ENCODE measurements at regions of chr5 and their contacts with region 1.

Region 1: DNA sequence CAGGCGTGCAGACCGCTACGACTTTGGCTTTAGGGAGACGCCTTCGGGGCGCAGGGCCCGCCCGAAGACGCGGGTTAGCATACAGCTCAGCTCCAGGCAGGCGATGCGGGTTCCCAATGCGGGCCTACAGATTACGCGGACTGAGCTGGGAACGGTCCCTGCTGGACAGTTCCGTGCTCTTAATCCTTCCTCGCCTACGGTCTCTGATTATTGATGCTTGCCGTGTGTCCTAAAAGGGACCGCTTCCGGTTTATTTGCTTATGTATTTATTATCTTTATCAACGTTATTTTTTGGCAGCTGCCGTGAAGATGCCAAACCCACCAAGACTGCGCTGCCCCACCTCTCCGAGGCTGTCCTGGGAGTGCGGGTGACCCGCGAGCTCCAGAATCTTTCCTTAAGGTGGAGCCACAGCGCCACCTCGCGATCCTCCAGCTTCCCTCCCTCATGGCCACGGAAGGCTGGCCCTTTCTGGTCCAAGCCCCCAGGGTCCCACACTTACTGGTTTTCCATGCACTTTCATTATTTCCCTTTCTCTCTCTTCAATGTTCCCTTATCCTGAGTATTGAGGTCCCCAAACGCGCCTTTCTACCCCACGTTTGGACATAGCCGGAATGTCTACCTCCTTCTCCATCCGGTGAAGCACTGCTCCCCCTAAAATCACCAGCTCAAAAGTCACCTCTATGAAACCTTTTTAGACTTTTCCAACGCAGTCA is 7.0 kb upstream of the EBF1 start:
- DNase-seq: peak; percentile 55 to 68 (median 67)
- H3K4me3 ChIP-seq: peak overlapping the region in 1 of 3 experiments; percentile 51
- H3K4me3 Mint-ChIP-seq: peak overlapping the region; percentile 76 to 90
- H3K27ac ChIP-seq: no peak overlapping the region
- H3K27ac Mint-ChIP-seq: peak overlapping the region in 2 of 7 donors; percentile 45 to 59
- H3K4me1 ChIP-seq: peaks cover 18% of the 10 kb centered on the region in 2 donors
- H3K4me1 Mint-ChIP-seq: peaks cover 27% of the 10 kb centered on the region
- H3K27me3 ChIP-seq: peaks cover 55 to 84% of the 10 kb centered on the region in 2 donors
- H3K27me3 Mint-ChIP-seq: peaks cover 63 to 86% (median 67%) of the 10 kb centered on the region in 3 donors
- CTCF ChIP-seq: peak; percentile 99

Region 2: GRCh38 chr5:157828944-157829632 is 1277.6 kb before region 1 on chr5:
- intact Hi-C with region 1: loop called in 1 of 2 experiments (anchors 5 kb)
- DNase-seq: no peak
- H3K4me3 ChIP-seq: no peak overlapping the region
- H3K4me3 Mint-ChIP-seq: no peak overlapping the region
- H3K27ac ChIP-seq: no peak overlapping the region
- H3K27ac Mint-ChIP-seq: peak overlapping the region in 3 of 7 donors; percentile 26 to 75 (median 36)
- H3K4me1 ChIP-seq: peaks cover 3 to 7% of the 10 kb centered on the region in 2 donors
- H3K4me1 Mint-ChIP-seq: peaks cover 40% of the 10 kb centered on the region
- H3K27me3 ChIP-seq: no peaks in the 10 kb centered on the region
- H3K27me3 Mint-ChIP-seq: peaks cover 0 to 2% (median 0%) of the 10 kb centered on the region in 3 donors
- CTCF ChIP-seq: peak; percentile 40

Region 3: DNA sequence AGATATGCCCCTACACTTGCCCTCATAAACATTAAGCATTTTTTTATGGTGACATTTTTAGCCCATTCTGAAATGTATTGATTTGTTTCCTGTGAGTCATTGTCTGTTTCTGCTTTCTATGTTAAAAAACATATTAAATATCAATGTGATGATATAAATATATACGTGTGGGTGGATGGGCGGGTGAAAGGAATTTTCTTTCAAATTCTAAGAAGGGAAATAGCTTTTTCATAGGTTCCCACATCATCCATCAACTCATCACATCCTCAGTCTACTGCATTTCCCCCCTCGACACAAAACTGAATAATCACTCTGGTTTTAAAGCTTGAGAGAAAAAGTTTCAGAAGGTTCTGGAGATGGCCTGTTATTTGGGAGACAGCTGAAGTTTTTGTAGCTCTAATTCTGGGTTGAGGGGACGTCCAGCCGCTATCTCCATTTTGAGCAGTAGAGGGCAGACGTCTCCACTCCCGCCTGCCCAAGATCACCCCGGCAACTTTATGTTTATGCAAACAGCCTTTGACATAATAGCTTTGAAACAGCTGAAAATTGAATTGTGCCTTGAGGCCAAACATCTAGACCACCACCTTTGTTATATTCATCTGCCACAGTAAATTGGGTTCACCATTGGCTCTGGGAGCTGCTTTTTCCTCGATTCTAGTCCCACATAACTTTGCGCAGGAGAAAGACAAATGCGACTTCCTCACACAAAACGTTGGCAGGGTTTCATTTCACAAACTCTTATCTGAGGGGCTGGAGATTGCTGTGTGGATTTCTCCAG is 1031.5 kb before region 1 on chr5:
- intact Hi-C with region 1: loop called in 1 of 2 experiments (anchors 5 kb)
- DNase-seq: peak; percentile 9 to 26 (median 17)
- H3K4me3 ChIP-seq: no peak overlapping the region
- H3K4me3 Mint-ChIP-seq: peak overlapping the region; percentile 51 to 81
- H3K27ac ChIP-seq: no peak overlapping the region
- H3K27ac Mint-ChIP-seq: no peak overlapping the region
- H3K4me1 ChIP-seq: no peaks in the 10 kb centered on the region
- H3K4me1 Mint-ChIP-seq: peaks cover 5% of the 10 kb centered on the region
- H3K27me3 ChIP-seq: peaks cover 0 to 2% of the 10 kb centered on the region in 2 donors
- H3K27me3 Mint-ChIP-seq: peaks cover 0 to 7% (median 7%) of the 10 kb centered on the region in 3 donors
- CTCF ChIP-seq: peak; percentile 81

Region 4: GRCh38 chr5:158174918-158175851 is 931.5 kb before region 1 on chr5:
- intact Hi-C with region 1: loop called (anchors 2 to 5 kb)
- DNase-seq: peak; percentile 33 to 62 (median 59)
- H3K4me3 ChIP-seq: no peak overlapping the region
- H3K4me3 Mint-ChIP-seq: no peak overlapping the region
- H3K27ac ChIP-seq: no peak overlapping the region
- H3K27ac Mint-ChIP-seq: no peak overlapping the region
- H3K4me1 ChIP-seq: no peaks in the 10 kb centered on the region
- H3K4me1 Mint-ChIP-seq: peaks cover 13% of the 10 kb centered on the region
- H3K27me3 ChIP-seq: no peaks in the 10 kb centered on the region
- H3K27me3 Mint-ChIP-seq: peaks cover 2 to 9% (median 4%) of the 10 kb centered on the region in 3 donors
- CTCF ChIP-seq: peak; percentile 81

Region 5: GRCh38 chr5:158695595-158696330 is 411.0 kb before region 1 on chr5:
- intact Hi-C with region 1: loop called (anchors 2 kb)
- DNase-seq: peak; percentile 47 to 66 (median 63)
- H3K4me3 ChIP-seq: no peak overlapping the region
- H3K4me3 Mint-ChIP-seq: no peak overlapping the region
- H3K27ac ChIP-seq: no peak overlapping the region
- H3K27ac Mint-ChIP-seq: no peak overlapping the region
- H3K4me1 ChIP-seq: no peaks in the 10 kb centered on the region
- H3K4me1 Mint-ChIP-seq: peaks cover 5% of the 10 kb centered on the region
- H3K27me3 ChIP-seq: no peaks in the 10 kb centered on the region
- H3K27me3 Mint-ChIP-seq: peaks cover 0 to 4% (median 1%) of the 10 kb centered on the region in 3 donors
- CTCF ChIP-seq: peak; percentile 99

Region 6: GRCh38 chr5:159082491-159082890 is 24.2 kb before region 1 on chr5:
- intact Hi-C with region 1: no loop called
- DNase-seq: no peak
- H3K4me3 ChIP-seq: no peak overlapping the region
- H3K4me3 Mint-ChIP-seq: no peak overlapping the region
- H3K27ac ChIP-seq: no peak overlapping the region
- H3K27ac Mint-ChIP-seq: no peak overlapping the region
- H3K4me1 ChIP-seq: no peaks in the 10 kb centered on the region
- H3K4me1 Mint-ChIP-seq: no peaks in the 10 kb centered on the region
- H3K27me3 ChIP-seq: no peaks in the 10 kb centered on the region
- H3K27me3 Mint-ChIP-seq: peaks cover 3 to 7% (median 5%) of the 10 kb centered on the region in 3 donors
- CTCF ChIP-seq: no peak

Measured in CD14-positive monocyte (primary cell).